PC-3 (cell line): ENCODE measurements at regions of chr7 and their contacts with region 1.

Region 1: DNA sequence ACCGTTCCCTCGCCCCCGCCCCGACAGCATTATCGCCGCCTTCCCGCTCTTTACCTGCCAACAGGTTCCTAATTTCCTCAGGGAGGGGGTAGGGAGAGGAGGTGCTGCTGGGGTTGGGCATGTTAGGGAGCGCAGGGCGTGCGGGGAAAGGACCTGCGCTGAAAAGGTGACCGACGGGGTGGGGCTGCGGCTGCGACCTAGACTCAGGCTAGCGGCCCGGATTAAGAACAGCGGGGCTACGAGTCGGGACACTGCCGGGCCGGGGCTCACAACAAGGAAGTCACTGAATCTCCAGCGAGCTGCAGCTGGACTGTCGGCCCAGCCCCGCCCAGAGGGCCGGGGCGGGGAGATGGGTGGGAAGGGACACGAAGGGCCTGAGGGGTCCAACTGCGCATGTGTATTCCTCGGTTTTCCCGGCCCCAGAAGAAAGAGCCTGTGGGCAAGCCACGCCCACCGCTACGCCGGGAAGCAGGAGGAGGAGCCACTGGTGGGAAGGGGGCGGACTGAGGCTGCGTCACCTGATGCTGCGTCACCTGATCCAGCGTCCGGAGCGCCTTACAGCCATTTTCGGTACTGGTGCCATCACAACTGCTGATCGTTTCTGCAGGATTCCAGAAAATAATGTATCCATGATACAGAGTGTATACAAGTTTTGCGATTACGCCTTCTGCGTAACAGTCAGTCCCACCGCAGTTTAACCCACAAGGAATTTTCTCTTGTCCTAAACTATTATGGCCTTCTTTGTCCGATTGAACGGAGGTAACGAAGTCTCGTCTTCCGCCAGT is at the start of gene SKAP2:
- DNase-seq: peak; percentile 99
- ATAC-seq: peak; percentile 85
- H3K4me3 ChIP-seq: peak within 1 kb of the TSS; percentile 92
- H3K27ac ChIP-seq: peak within 1 kb of the TSS; percentile 81
- H3K4me1 ChIP-seq: peaks cover 42% of the 10 kb centered on the region
- H3K27me3 ChIP-seq: no peaks in the 10 kb centered on the region
- CTCF ChIP-seq: no peak
- total RNA-seq, gene SKAP2: 9.6 and 18.4 TPM in 2 replicates

Region 2: GRCh38 chr7:27031289-27032172 is 167.0 kb after region 1 on chr7:
- CTCF ChIA-PET with region 1: no interaction called
- POLR2A ChIA-PET with region 1: no interaction called
- intact Hi-C with region 1: loop called (anchors 5 kb)
- DNase-seq: peak; percentile 57
- ATAC-seq: peak; percentile 86
- H3K4me3 ChIP-seq: peak overlapping the region; percentile 1; the same call in 1 of the 2 replicates
- H3K27ac ChIP-seq: peak overlapping the region; percentile 50
- H3K4me1 ChIP-seq: peaks cover 15% of the 10 kb centered on the region
- H3K27me3 ChIP-seq: no peaks in the 10 kb centered on the region
- CTCF ChIP-seq: no peak

Region 3: GRCh38 chr7:27046854-27047549 is 182.5 kb after region 1 on chr7:
- CTCF ChIA-PET with region 1: no interaction called
- POLR2A ChIA-PET with region 1: no interaction called
- intact Hi-C with region 1: loop called (anchors 5 kb)
- DNase-seq: peak; percentile 79
- ATAC-seq: peak; percentile 96
- H3K4me3 ChIP-seq: peak overlapping the region; percentile 51; the same call in 1 of the 2 replicates
- H3K27ac ChIP-seq: peak overlapping the region; percentile 68
- H3K4me1 ChIP-seq: peaks cover 13% of the 10 kb centered on the region
- H3K27me3 ChIP-seq: no peaks in the 10 kb centered on the region
- CTCF ChIP-seq: no peak

Region 4: DNA sequence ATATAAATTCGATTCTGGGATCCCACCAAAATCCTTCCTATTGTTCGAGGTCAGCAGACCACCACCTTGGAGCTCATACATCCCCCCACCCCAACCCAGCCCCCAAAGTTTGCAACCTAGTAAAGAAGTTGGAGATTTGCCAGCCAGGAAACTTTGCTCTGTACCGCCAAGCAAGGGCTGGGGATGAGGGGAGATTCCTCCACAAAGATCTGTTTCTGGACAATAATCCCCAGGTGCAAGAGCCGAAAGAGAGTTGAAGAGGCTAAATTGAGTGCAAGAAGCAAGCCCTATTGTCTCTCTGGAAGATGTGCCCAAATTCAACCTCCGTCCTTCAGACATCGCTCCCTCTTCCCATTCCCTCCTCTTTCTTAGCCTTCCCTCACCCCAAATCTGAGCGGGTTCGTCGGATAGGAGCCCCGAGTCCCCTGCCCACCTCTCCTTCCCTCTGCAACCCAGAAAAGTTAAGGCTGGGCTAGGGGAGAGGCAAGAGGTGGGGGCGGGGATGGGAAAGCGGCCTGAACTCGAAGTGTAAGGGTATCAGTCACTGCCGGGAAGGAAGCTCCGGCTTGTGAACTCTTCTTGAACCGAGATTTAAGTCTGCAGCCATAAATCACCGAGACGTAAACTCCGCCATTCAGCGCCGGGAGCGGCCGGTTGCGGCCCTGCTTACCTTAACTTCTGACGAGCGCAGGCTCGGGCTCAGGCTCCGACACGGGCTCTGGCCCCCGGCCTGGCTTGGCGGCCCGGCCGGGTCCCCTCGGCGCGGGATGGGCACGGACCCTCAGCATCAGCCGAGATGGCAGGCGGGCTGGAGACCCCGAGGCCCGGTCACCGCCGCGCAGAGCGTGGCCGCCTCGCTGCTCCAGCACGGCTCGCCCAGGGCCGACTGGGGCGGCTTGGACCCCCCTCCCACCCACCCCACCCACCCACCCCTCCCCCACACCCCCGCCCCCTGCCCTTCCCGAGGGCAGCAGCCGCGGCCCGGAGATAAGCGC is 248.8 kb after region 1 on chr7:
- CTCF ChIA-PET with region 1: no interaction called
- POLR2A ChIA-PET with region 1: interaction called, 4 read pairs
- intact Hi-C with region 1: loop called (anchors 1 kb)
- DNase-seq: peak; percentile 84
- ATAC-seq: peak; percentile 31
- H3K4me3 ChIP-seq: peak overlapping the region; percentile 99
- H3K27ac ChIP-seq: peak overlapping the region; percentile 99
- H3K4me1 ChIP-seq: peaks cover 59% of the 10 kb centered on the region
- H3K27me3 ChIP-seq: no peaks in the 10 kb centered on the region
- CTCF ChIP-seq: no peak

Region 5: DNA sequence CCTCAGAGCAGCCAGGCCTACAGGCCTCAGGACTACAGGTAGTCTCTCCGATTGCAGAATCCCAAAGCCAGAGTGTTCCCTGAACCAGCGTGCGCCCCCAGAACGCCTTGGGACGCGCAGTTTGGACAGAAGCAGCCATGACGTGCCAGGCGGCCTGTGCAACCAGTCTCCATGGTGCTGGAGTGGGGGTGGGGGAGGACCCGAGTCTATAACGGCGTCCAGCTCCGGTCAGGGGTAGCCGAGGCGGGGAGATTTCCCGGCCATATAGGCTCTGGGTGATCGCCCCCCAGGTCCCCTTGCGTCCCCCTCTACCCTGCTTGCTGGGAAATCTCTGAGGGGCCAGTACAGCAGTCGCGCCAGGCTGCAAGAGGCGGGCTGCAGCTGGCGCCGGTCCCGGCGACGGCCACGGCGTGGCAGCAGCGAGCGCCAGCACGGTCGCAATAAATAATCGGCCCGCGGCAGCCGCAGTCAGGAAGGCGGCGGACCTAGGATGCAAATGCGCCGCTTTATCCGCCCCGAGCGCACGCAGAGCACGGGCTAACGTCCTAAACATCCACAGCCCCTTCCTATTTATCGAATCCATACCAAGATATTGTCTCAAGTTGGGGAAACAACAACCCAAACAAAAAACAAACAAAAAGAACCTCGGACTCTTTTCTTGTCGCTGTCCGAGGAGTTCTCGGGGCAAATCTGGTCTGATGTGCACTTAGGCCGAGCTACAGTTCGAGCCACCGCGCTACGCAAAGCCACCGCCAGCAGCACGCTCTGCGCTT is 286.3 kb after region 1 on chr7:
- CTCF ChIA-PET with region 1: no interaction called
- POLR2A ChIA-PET with region 1: interaction called, 3 read pairs
- intact Hi-C with region 1: loop called (anchors 1 kb)
- DNase-seq: peak; percentile 86
- ATAC-seq: peak; percentile 33
- H3K4me3 ChIP-seq: peak overlapping the region; percentile 78
- H3K27ac ChIP-seq: peak overlapping the region; percentile 84
- H3K4me1 ChIP-seq: peaks cover 34% of the 10 kb centered on the region
- H3K27me3 ChIP-seq: no peaks in the 10 kb centered on the region
- CTCF ChIP-seq: peak; percentile 82